ENCODE measurements at regions of chr2 and their contacts with region 1.

Region 1: DNA sequence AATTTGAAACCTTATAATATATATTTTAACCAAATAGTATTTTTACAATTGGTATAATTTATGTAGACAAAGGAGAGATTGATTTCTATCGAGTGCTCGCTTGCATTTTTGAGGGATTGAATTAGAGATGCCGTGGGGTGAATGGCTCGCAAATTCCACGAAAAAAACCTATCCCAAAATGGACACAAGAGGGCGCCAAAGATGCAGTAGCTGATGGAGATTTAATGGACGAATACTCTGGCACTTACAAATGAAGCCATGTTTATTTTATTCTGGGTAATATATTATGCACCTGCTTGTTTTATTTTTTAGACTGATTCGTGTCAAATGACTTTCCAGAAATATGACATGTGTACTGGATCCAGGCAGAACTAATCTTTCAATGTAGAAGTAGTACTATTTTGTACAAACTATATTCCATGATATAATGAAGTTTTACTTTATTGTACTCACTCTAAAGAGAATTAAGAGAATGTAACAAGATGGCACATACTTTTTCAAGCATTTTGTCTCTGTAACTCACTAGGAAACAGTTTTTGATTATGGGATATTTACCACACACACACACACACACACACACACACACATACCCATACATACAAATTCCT is 505.4 kb downstream of the PLCL1 start:
- DNase-seq: peak in 4 of 10 donors; percentile 14 to 68 (median 46)
- H3K4me3 ChIP-seq: peak overlapping the region in 1 of 59 donors; percentile 22
- H3K27ac ChIP-seq: no peak overlapping the region
- H3K27me3 ChIP-seq: peaks cover 0 to 8% (median 0%) of the 10 kb centered on the region in 45 donors
- CTCF ChIP-seq: peak; percentile 73 to 97 (median 88)

Region 2: GRCh38 chr2:197442857-197443256 is 866.9 kb before region 1 on chr2:
- intact Hi-C with region 1: no loop called
- DNase-seq: no peak
- H3K4me3 ChIP-seq: no peak overlapping the region
- H3K27ac ChIP-seq: peak overlapping the region in 12 of 59 donors; percentile 4 to 48 (median 22)
- H3K27me3 ChIP-seq: no peaks in the 10 kb centered on the region
- CTCF ChIP-seq: no peak

Region 3: DNA sequence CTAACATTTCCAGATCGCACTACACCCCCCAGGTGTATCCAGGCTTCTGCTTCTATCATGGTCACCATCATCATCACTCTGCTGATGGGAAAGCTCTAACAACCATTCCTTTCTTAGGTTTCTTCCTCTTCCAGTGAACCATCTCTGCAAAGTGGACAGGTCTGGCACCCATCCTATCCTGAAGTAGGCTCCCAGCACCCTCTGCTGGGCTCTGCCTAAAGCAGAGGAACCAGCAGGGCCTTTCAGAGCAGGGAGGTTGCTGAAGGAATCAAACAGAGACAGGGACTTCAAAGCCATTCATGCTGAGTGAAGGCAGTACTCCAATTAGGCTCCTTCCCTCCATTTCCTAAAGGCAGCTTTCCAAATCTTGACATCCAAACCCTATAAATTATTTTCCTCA is 1175.2 kb after region 1 on chr2:
- intact Hi-C with region 1: loop called in 1 of 2 experiments (anchors 5 kb)
- DNase-seq: no peak
- H3K4me3 ChIP-seq: no peak overlapping the region
- H3K27ac ChIP-seq: no peak overlapping the region
- H3K27me3 ChIP-seq: peaks cover 0 to 3% (median 0%) of the 10 kb centered on the region in 45 donors
- CTCF ChIP-seq: no peak